ENCODE measurements at regions of chr4 and their contacts with region 1.

Region 1: DNA sequence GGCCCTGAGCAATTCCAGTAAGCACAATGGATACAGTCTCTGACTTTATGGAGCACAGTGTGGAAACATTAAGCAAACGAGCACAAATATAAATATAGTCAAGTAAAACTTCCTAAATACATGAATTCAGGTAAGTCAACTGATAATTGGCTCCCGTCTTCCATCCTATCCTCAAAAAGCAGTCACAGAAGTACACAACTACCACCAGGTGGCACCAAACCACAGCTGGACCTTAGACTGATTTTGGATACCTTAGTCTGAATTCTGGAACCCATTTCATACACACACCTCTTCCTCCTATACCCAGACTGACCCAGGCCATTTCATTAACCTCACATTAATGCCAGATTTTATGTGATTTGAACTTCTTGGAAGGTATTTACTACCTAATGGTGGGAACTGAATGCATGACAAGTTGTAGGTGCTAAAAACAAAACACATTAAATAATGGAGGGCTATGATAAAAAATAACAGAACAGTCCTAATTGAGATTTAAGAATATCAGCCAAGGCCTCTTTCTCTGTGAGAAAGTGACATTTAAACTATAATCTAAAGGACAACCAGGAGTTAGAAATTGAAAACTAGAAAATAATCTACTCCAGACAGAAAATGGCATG is 77.5 kb downstream of the ELF2 start:
- DNase-seq: no peak
- ATAC-seq: peak; percentile 73

Region 2: DNA sequence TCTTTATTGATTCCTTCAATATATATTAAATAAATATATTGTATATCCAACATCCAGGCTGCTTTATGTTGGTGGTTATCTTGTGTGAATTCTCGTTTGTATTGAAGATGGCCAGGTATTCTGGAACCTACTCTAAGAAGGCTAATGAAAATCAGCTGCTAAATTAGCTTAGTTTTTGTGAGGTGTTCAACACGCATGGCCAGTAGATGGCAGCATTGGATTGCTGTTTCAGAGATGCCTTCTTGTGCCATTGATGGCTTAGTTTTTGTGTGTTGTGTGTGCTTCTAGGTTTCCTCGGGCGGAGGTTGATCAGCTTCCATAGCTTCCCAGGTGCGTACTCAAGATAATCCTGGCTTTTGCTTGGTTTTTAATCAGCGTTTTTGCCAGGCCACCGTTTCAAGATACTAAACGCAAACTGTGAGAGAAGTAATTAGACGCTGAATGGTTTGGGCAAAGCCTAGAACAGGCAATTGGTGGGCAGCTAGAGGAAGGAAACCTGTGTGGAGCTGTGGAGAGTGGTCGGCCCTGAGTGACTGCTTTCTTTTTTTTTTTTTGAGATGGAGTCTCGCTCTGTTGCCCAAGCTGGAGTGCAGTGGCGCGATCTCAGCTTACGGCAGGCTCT is 68.7 kb before region 1 on chr4:
- intact Hi-C with region 1: no loop called
- DNase-seq: no peak
- ATAC-seq: peak; percentile 34

Region 3: DNA sequence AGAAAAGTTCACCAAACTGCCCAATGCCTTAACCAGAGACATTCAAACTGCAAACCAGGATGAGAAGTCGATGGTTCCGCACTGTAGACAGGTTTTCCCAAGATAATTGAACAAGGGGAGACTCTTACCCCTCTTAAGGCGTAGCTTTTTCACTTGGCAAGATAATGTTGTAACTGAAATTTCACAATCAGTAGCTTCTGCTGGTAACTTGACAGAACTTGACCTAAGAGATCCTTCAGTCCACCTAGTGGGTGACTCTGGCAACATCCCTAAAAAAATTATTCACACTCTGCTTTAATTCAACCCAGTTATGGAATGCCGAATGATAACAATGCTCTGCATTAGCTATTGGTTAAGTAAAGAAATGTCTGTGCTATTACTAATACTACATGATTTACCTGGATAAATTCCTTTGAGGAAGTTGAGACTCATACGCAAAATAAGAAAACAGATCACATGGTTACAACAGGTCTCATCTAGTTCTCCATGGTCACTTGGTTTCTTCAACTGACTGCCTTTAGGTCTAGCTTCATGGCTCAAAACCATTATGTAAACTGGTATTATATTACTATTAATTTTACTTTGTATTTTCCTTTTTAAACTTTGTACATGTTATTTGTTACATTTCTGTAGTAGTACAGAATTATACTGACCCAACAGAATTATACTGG is 68.4 kb after region 1 on chr4:
- intact Hi-C with region 1: loop called (anchors 2 kb)
- DNase-seq: no peak
- ATAC-seq: peak; percentile 53

Region 4: DNA sequence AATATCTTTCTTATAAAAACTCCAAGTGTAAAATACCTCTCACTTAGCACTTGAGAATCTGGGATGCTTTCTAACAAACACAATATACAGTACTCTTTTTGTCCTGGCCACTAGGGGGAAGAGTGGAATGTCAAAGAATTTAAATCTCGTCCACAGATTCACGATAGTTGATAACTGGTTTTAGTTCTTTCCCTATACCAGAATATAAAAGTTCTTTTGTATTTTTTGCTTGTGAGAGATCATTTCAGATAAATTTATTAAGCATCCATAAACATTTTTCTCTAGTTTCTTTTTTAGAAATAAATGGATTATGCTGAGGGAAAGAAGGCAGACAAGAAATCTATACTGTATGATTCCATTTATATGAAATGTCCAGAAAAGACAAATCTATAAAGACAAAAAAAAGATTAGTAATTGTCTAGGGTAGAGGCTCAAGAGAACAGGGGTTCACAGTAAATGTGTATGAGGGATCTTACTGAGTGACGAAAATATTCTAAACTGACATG is 130.1 kb after region 1 on chr4:
- intact Hi-C with region 1: loop called (anchors 2 kb)
- DNase-seq: no peak
- ATAC-seq: no peak

Region 5: DNA sequence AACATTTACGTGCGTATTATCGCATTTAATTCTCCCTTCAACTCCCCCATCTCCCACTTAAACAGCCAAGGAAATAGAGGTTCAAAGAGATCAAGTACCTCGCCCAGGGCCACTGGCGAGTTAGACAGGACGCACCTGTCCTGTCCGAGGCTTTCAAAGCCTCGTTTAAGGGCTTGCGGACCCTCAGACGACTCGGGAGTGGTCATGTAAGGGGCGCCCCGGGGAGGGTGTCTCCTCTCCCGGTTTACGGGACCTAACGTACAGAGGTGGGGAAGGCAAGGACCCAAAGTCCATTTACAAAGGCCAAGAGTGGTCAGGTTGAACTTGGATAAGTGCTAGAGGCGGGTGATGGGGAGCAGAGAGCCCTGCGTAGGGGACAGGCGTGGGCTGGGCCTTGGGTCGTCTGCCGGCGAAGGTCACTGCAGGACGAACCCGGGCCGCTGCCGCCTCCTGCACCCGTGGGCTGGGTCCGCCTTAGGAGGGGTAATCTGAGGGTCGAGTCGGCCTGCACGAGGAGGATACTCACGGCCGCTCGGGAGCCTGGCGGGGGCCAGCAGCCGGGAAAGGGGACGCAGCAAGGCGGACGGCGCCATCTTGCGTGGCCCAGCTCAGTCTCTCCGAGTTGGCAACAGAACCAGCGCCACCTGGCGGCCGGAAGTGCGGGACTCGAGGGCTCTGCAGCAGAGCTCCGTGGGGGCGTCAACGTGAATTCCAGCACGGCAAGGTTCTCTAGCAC is 195.9 kb after region 1 on chr4:
- intact Hi-C with region 1: loop called (anchors 5 kb)
- DNase-seq: peak; percentile 100
- ATAC-seq: peak; percentile 98

Measured in Right ventricle myocardium inferior (tissue), 1 donor.